PC-3 (cell line): ENCODE measurements at regions of chr3 and their contacts with region 1.

Region 1: GRCh38 chr3:146640955-146641867 is 36.1 kb upstream of the PLSCR5 start:
- DNase-seq: peak; percentile 77
- ATAC-seq: peak; percentile 85
- H3K4me3 ChIP-seq: no peak overlapping the region
- H3K27ac ChIP-seq: no peak overlapping the region
- H3K4me1 ChIP-seq: no peaks in the 10 kb centered on the region
- H3K27me3 ChIP-seq: no peaks in the 10 kb centered on the region
- CTCF ChIP-seq: peak; percentile 67

Region 2: DNA sequence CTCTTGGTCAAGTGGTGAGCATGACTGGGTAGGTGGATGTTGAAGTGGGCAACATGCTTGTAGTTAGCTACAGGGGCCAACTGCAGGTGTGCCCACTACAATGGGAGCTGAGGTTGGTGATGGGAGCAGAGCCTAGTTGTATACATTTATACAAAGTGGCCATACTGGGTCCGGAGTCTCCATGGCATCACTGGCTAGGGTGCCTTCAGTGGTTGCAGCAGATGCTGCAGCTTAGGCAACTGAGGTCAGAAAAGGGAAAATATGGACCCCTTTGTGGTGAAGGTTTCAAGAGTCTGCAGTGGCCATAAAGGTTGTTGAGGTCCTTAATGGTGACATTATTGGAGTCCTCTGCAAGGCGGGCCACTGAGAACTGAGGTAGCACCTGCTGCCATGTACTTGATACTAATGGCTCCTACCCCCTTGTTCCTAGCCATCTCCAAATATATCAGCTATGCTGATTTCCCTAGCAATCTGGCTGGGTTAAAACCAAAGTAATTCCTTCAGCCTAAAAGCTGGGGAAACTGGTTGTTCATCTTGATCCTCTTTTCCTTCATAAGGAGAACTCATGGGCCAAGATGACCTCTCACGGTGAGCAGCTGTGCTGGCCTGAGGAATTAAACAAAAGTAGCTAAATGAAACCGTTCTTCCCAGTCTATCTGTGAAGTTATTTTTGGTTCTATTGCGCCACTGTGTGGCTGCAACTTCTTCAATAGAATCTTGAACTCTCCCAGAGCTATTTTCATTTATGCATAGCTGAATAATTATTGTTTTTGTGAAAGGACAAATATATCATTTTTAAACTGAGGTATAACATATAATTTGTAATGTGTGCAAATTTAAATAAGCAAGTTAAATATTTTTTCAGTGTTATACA is 314.3 kb before region 1 on chr3:
- CTCF ChIA-PET with region 1: interaction called, 3 read pairs
- POLR2A ChIA-PET with region 1: no interaction called
- intact Hi-C with region 1: loop called (anchors 2 kb)
- DNase-seq: peak; percentile 84
- ATAC-seq: peak; percentile 96
- H3K4me3 ChIP-seq: no peak overlapping the region
- H3K27ac ChIP-seq: no peak overlapping the region
- H3K4me1 ChIP-seq: no peaks in the 10 kb centered on the region
- H3K27me3 ChIP-seq: no peaks in the 10 kb centered on the region
- CTCF ChIP-seq: peak; percentile 91

Region 3: DNA sequence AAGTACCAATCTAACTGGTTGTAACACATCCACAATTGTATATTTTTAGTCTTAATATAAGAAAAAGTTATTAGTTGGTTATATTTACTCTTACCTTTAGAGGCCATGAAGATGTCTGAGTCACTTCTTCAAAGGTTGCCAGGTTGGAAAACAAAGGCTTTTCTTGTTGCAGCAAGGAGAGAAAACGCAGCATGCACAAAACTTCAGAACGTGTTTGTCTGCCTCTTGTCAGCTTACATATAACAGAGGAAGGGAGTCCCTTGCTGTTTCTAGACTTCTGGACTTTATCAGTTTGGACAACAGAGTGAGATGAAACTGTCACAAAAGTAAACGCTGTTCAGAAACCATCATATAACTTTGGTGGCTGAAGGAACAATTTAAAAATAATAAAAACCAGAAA is 36.1 kb before region 1 on chr3 and contains the start of gene PLSCR5:
- CTCF ChIA-PET with region 1: no interaction called
- POLR2A ChIA-PET with region 1: no interaction called
- intact Hi-C with region 1: no loop called
- DNase-seq: peak; percentile 85
- ATAC-seq: peak; percentile 96
- H3K4me3 ChIP-seq: no peak within 1 kb of the TSS; the same call in 1 of the 2 replicates
- H3K27ac ChIP-seq: 0 out of 2 replicates have a peak within 1 kb of the TSS, but pooled peaks have one; percentile 10
- H3K4me1 ChIP-seq: peaks cover 8% of the 10 kb centered on the region
- H3K27me3 ChIP-seq: 0 out of 2 replicates have a peak, but pooled peaks cover 2% of the 10 kb centered on the region
- CTCF ChIP-seq: no peak
- total RNA-seq, gene PLSCR5: not detected in 2 replicates

Region 4: GRCh38 chr3:146709969-146710368 is 68.8 kb after region 1 on chr3:
- CTCF ChIA-PET with region 1: no interaction called
- POLR2A ChIA-PET with region 1: no interaction called
- intact Hi-C with region 1: loop called (anchors 1 kb)
- DNase-seq: peak; percentile 38
- ATAC-seq: peak; percentile 62
- H3K4me3 ChIP-seq: no peak overlapping the region
- H3K27ac ChIP-seq: peak overlapping the region; percentile 44
- H3K4me1 ChIP-seq: peaks cover 44% of the 10 kb centered on the region
- H3K27me3 ChIP-seq: no peaks in the 10 kb centered on the region
- CTCF ChIP-seq: no peak

Region 5: DNA sequence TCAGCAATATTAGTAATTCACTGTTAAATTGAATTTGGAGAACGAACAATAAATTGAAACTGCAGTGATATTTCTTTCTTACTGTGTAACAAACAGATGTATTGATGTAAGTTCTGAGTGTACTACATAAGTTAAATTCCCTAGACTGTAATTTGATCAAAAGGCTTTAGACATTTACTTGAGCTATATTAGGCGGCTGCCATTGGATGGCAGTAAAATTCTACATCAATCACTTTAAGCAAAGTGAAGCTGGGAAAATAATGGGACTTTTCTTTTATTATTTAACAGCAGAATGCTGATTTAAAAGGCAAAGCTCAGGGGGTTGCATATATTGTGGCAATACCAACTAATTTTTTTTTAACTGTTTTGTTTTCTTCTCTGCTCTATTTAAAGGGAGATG is 176.5 kb after region 1 on chr3:
- CTCF ChIA-PET with region 1: no interaction called
- POLR2A ChIA-PET with region 1: no interaction called
- intact Hi-C with region 1: loop called (anchors 2 kb)
- DNase-seq: peak; percentile 63
- ATAC-seq: peak; percentile 78
- H3K4me3 ChIP-seq: no peak overlapping the region
- H3K27ac ChIP-seq: no peak overlapping the region
- H3K4me1 ChIP-seq: no peaks in the 10 kb centered on the region
- H3K27me3 ChIP-seq: peaks cover 39% of the 10 kb centered on the region
- CTCF ChIP-seq: peak; percentile 71

Region 6: GRCh38 chr3:146912241-146913015 is 271.2 kb after region 1 on chr3:
- CTCF ChIA-PET with region 1: no interaction called
- POLR2A ChIA-PET with region 1: no interaction called
- intact Hi-C with region 1: no loop called
- DNase-seq: no peak
- ATAC-seq: no peak
- H3K4me3 ChIP-seq: no peak overlapping the region
- H3K27ac ChIP-seq: no peak overlapping the region
- H3K4me1 ChIP-seq: no peaks in the 10 kb centered on the region
- H3K27me3 ChIP-seq: peaks cover 38% of the 10 kb centered on the region
- CTCF ChIP-seq: no peak

Region 7: GRCh38 chr3:147119989-147120388 is 478.8 kb after region 1 on chr3:
- CTCF ChIA-PET with region 1: no interaction called
- POLR2A ChIA-PET with region 1: no interaction called
- intact Hi-C with region 1: loop called (anchors 5 kb)
- DNase-seq: peak; percentile 40
- ATAC-seq: no peak
- H3K4me3 ChIP-seq: no peak overlapping the region
- H3K27ac ChIP-seq: no peak overlapping the region
- H3K4me1 ChIP-seq: no peaks in the 10 kb centered on the region
- H3K27me3 ChIP-seq: 0 out of 2 replicates have a peak, but pooled peaks cover 5% of the 10 kb centered on the region
- CTCF ChIP-seq: peak; percentile 70